AG04450 (cell line): ENCODE measurements at regions of chr20 and their contacts with region 1.

Region 1: DNA sequence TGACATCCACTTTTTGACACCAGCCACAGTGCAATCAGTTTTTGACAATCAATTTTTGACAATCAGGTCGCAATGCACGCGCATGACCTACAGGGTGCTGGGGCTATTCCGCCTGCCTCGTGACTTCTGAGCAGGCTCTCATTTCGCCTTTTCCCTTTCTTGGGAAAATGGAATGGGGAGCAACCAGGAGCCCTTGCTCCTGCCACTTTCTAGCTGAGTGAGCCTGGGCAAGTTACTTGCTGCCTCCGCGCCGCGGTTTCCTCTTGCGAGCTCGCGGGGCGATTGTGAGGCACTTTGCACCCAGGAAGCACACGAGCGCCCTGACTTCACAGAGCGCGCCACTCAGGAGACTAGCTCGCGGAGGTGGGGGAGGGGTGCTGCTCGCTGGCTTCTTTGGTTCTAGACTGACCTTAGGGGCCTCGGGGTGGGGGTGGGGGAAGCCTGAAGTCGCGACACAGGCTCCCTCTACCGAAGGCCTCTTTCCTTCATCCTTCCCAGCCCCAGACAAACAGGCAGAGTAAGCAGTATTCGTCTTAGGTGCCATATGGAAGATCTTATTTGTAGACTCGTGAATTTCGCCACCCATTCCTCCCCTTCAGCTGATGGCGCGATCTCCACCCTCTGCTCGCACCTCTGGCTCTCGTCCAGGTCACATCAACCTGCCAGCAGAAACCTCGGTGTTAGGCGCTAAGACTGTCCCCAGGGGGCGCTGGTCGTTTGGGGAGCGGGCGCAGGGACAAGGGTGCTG is 4.6 kb downstream of the TP53TG5 start:
- DNase-seq: no peak
- H3K4me3 ChIP-seq: peak overlapping the region; percentile 52
- H3K27ac ChIP-seq: no peak overlapping the region
- H3K27me3 ChIP-seq: no peaks in the 10 kb centered on the region
- CTCF ChIP-seq: peak; percentile 88

Region 2: GRCh38 chr20:45341939-45342859 is 31.3 kb before region 1 on chr20:
- CTCF ChIA-PET with region 1: interaction called, 14 read pairs
- POLR2A ChIA-PET with region 1: interaction called, 4 read pairs
- DNase-seq: no peak
- H3K4me3 ChIP-seq: peak overlapping the region; percentile 97
- H3K27ac ChIP-seq: peak overlapping the region; percentile 85
- H3K27me3 ChIP-seq: no peaks in the 10 kb centered on the region
- CTCF ChIP-seq: no peak

Region 3: GRCh38 chr20:45362804-45363610 is 10.5 kb before region 1 on chr20 and contains the start of gene SYS1:
- CTCF ChIA-PET with region 1: interaction called, 42 read pairs
- POLR2A ChIA-PET with region 1: interaction called, 8 read pairs
- DNase-seq: peak; percentile 97
- H3K4me3 ChIP-seq: peak within 1 kb of the TSS; percentile 96
- H3K27ac ChIP-seq: peak within 1 kb of the TSS; percentile 97
- H3K27me3 ChIP-seq: no peaks in the 10 kb centered on the region
- CTCF ChIP-seq: peak; percentile 94
- polyA plus RNA-seq, gene SYS1: 25.1 and 33.4 TPM in 2 replicates

Region 4: DNA sequence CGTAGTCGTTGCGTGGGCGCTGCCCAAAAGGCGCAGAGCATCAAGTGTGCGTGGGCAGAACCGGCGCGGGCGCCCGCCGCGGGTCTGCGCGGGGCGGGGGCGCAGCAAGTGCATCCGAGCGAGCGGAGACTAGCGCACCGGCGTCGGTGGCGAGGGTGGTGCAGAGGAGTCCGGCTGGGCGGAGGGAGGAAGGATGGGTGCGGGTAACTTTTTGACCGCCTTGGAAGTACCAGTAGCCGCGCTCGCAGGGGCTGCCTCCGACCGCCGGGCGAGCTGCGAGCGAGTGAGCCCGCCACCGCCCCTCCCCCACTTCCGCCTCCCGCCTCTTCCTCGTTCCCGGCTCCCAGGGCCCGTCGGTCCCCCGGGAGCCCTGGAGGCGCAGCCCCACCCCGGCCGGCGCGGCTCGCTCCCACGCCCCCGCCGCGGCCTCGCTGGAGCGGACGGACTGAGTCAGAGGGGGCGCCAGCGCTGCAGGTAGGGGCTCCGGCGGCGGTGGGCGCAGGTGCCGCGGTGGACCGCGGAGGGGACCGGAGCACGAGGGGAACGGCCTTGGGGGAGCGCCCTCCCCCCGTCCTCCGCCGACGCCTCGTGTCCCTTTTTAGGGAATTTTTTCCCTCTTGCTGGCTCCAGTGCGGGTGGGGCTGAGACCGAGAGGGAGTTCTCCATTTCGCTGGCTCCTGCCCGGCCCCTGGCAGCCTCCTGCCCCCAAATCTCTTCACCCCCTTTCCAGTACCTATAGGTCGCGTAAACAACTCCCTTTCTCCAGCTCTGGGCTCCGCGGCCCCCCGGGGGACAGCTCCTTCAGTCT is 32.9 kb after region 1 on chr20:
- CTCF ChIA-PET with region 1: interaction called, 31 read pairs
- POLR2A ChIA-PET with region 1: no interaction called
- DNase-seq: no peak
- H3K4me3 ChIP-seq: peak overlapping the region; percentile 70
- H3K27ac ChIP-seq: no peak overlapping the region
- H3K27me3 ChIP-seq: no peaks in the 10 kb centered on the region
- CTCF ChIP-seq: no peak

Region 5: DNA sequence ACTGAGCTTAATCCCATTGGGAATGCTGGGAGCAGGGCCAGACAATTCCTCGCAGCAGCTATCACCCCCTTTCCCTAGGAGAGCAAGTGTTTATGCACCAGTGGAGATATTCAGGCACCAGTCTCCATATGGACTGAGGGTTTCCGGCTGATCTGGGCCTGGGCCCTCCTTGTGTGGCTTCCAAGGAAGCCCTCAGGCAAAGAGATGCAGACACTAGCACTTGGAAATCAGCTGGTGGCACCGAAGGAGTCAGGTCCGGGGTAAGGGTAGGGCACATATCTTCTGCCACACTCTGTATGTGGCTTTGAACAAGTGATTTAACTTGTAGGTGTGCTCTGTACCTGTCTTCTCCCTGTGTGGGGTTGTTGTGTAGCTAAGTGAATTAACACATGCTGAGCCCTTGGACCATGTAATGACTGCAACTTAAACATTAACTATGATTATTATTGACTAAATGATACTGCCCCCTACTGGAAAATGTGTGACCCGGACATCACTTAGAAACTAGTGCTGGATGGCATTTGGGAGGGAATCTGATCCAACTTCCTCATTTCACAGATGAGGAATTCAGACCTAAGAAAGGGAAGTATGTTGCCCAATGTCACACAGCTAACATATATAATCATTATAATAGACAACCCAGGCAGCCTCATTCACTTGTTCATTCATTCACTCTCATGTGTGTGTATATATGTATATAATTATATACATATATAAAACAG is 76.7 kb after region 1 on chr20:
- CTCF ChIA-PET with region 1: interaction called, 16 read pairs
- POLR2A ChIA-PET with region 1: no interaction called
- DNase-seq: no peak
- H3K4me3 ChIP-seq: no peak overlapping the region
- H3K27ac ChIP-seq: no peak overlapping the region
- H3K27me3 ChIP-seq: peaks cover 18% of the 10 kb centered on the region
- CTCF ChIP-seq: peak; percentile 62

Region 6: GRCh38 chr20:45495501-45495941 is 122.0 kb after region 1 on chr20:
- CTCF ChIA-PET with region 1: no interaction called
- POLR2A ChIA-PET with region 1: no interaction called
- DNase-seq: no peak
- H3K4me3 ChIP-seq: no peak overlapping the region
- H3K27ac ChIP-seq: no peak overlapping the region
- H3K27me3 ChIP-seq: peaks cover 9% of the 10 kb centered on the region
- CTCF ChIP-seq: no peak